ENCODE measurements at regions of chr17 and their contacts with region 1.

Region 1: DNA sequence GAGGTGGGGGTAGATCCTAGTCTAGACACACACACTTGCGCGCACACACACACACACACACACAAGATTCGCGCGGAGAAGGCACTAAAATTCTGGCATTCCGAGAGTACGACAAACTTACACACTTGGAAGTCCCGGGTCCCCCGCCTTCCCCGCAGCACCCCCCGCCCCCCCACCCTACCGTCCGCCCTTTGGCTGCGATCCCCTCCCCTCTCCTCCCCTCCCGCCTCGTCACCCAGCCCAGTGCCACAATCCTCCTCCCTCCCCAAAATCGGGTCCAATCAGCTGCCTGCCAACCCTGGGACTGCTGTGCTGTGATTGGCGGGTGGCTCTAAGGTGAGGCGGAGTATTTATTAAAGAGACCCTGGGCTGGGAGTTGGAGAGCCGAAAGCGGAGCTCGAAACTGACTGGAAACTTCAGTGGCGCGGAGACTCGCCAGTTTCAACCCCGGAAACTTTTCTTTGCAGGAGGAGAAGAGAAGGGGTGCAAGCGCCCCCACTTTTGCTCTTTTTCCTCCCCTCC is at the start of gene SOX9:
- DNase-seq: peak; percentile 87
- H3K4me3 ChIP-seq: peak within 1 kb of the TSS; percentile 94
- H3K27ac ChIP-seq: peak within 1 kb of the TSS; percentile 68
- H3K27me3 ChIP-seq: peaks cover 27% of the 10 kb centered on the region
- CTCF ChIP-seq: no peak
- polyA plus RNA-seq, gene SOX9: 5.5 and 6.0 TPM in 2 replicates

Region 2: GRCh38 chr17:71472809-71473789 is 647.6 kb before region 1 on chr17:
- CTCF ChIA-PET with region 1: interaction called, 14 read pairs
- POLR2A ChIA-PET with region 1: no interaction called
- DNase-seq: peak; percentile 42
- H3K4me3 ChIP-seq: no peak overlapping the region
- H3K27ac ChIP-seq: no peak overlapping the region
- H3K27me3 ChIP-seq: no peaks in the 10 kb centered on the region
- CTCF ChIP-seq: peak; percentile 83

Region 3: DNA sequence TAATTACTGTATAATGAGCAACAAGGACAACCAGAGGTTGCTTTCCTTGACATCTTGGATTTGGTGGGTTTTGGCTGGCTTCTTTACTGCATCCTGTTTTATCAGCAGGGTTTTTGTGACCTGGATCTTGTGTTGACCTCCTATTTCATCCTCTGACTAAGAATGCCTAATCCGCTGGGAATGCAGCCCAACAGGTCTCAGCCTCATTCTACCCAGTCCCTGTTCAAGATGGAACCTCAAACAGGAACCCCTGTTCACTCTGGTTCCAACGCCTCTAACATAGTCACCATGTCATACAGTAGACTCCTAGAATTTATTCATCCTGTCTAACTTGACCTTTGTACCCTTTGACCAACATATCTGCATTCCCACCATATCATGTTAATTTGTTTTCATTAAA is 183.7 kb before region 1 on chr17:
- CTCF ChIA-PET with region 1: no interaction called
- POLR2A ChIA-PET with region 1: no interaction called
- DNase-seq: no peak
- H3K4me3 ChIP-seq: no peak overlapping the region
- H3K27ac ChIP-seq: no peak overlapping the region
- H3K27me3 ChIP-seq: no peaks in the 10 kb centered on the region
- CTCF ChIP-seq: no peak

Region 4: GRCh38 chr17:71976011-71976649 is 144.6 kb before region 1 on chr17:
- CTCF ChIA-PET with region 1: interaction called, 4 read pairs
- POLR2A ChIA-PET with region 1: interaction called, 13 read pairs
- DNase-seq: peak; percentile 89
- H3K4me3 ChIP-seq: peak overlapping the region; percentile 37
- H3K27ac ChIP-seq: peak overlapping the region; percentile 92
- H3K27me3 ChIP-seq: no peaks in the 10 kb centered on the region
- CTCF ChIP-seq: no peak

Region 5: GRCh38 chr17:72191921-72192799 is 71.5 kb after region 1 on chr17:
- CTCF ChIA-PET with region 1: no interaction called
- POLR2A ChIA-PET with region 1: interaction called, 22 read pairs
- DNase-seq: peak; percentile 90
- H3K4me3 ChIP-seq: no peak overlapping the region
- H3K27ac ChIP-seq: peak overlapping the region; percentile 85
- H3K27me3 ChIP-seq: no peaks in the 10 kb centered on the region
- CTCF ChIP-seq: no peak

Region 6: GRCh38 chr17:72338847-72339790 is 218.4 kb after region 1 on chr17:
- CTCF ChIA-PET with region 1: interaction called, 5 read pairs
- POLR2A ChIA-PET with region 1: interaction called, 13 read pairs
- DNase-seq: peak; percentile 86
- H3K4me3 ChIP-seq: 0 out of 2 replicates have a peak overlapping the region, but pooled peaks have one; percentile 17
- H3K27ac ChIP-seq: peak overlapping the region; percentile 98
- H3K27me3 ChIP-seq: no peaks in the 10 kb centered on the region
- CTCF ChIP-seq: no peak

Region 7: GRCh38 chr17:72539981-72540897 is 419.5 kb after region 1 on chr17:
- CTCF ChIA-PET with region 1: interaction called, 42 read pairs
- POLR2A ChIA-PET with region 1: interaction called, 18 read pairs
- DNase-seq: no peak
- H3K4me3 ChIP-seq: peak overlapping the region; percentile 52
- H3K27ac ChIP-seq: peak overlapping the region; percentile 47
- H3K27me3 ChIP-seq: no peaks in the 10 kb centered on the region
- CTCF ChIP-seq: peak; percentile 76

Measured in AG04450 (cell line).